GM12878 (cell line): ENCODE measurements at regions of chr2 and their contacts with region 1.

Region 1: GRCh38 chr2:50133766-50134165 is 898.2 kb downstream of the NRXN1 start:
- DNase-seq: no peak
- ATAC-seq: no peak
- H3K4me3 ChIP-seq: no peak overlapping the region
- H3K27ac ChIP-seq: no peak overlapping the region
- H3K4me1 ChIP-seq: no peaks in the 10 kb centered on the region
- H3K27me3 ChIP-seq: no peaks in the 10 kb centered on the region
- CTCF ChIP-seq: no peak
- EP300 ChIP-seq: no peak
- POLR2A ChIP-seq: no peak
- RAD21 ChIP-seq: no peak

Region 2: DNA sequence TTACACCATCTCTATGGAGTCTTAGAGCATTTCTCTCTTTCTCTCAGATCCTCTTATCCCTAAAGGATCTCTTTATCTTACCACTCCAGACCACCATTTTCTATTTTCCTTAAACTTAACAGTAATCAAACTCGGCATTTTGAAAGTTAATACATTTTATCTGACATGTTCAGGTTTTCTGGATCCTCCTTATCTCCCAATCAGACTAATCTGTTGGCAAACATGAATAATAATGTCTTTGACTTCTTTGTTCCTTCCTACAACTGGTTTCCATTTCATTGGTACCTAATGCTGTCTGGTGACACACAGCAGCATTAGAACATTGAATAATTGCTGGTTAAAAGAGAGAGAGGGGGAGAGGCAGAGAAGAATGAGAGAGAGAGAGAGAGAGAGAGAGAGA is 47.3 kb before region 1 on chr2:
- CTCF ChIA-PET with region 1: no interaction called
- POLR2A ChIA-PET with region 1: no interaction called
- RAD21 ChIA-PET with region 1: no interaction called
- SMC1A ChIA-PET with region 1: interaction called, 3 read pairs
- in situ Hi-C with region 1: no loop called
- intact Hi-C with region 1: loop called (anchors 1 kb)
- DNase-seq: no peak
- ATAC-seq: no peak
- H3K4me3 ChIP-seq: no peak overlapping the region
- H3K27ac ChIP-seq: no peak overlapping the region
- H3K4me1 ChIP-seq: no peaks in the 10 kb centered on the region
- H3K27me3 ChIP-seq: no peaks in the 10 kb centered on the region
- CTCF ChIP-seq: no peak
- EP300 ChIP-seq: no peak
- POLR2A ChIP-seq: no peak
- RAD21 ChIP-seq: no peak

Region 3: DNA sequence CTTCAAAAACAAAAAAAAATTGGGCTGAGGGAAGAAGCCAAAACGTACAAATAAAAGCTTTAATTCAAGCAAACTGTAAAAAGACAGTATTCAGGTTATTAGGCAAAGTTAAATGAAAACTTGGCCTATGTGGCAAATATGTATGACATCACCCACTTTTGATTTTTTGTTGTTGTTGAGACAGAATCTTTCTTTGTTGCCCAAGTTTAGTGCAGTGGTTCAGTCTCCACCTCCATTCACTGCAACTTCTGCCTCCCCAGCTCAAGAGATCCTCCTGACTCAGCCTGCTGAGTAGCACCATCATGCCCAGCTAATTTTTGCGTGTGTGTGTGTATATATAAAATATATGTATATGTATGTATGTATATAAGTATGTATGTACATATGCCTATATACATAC is 1338.5 kb after region 1 on chr2:
- CTCF ChIA-PET with region 1: no interaction called
- POLR2A ChIA-PET with region 1: no interaction called
- RAD21 ChIA-PET with region 1: no interaction called
- SMC1A ChIA-PET with region 1: no interaction called
- in situ Hi-C with region 1: no loop called
- intact Hi-C with region 1: no loop called
- DNase-seq: no peak
- ATAC-seq: no peak
- H3K4me3 ChIP-seq: no peak overlapping the region
- H3K27ac ChIP-seq: no peak overlapping the region
- H3K4me1 ChIP-seq: no peaks in the 10 kb centered on the region
- H3K27me3 ChIP-seq: no peaks in the 10 kb centered on the region
- CTCF ChIP-seq: no peak
- EP300 ChIP-seq: no peak
- POLR2A ChIP-seq: no peak
- RAD21 ChIP-seq: no peak